Activated naive CD4-positive, alpha-beta T cell treated with anti-CD3 and anti-CD28 coated beads for 36 hours (primary cell): ENCODE measurements at regions of chr6 and their contacts with region 1.

Region 1: GRCh38 chr6:134063966-134064445 is 11.6 kb upstream of the SLC2A12 start:
- DNase-seq: peak; percentile 74
- H3K4me3 Mint-ChIP-seq: no peak overlapping the region
- H3K27ac Mint-ChIP-seq: no peak overlapping the region
- H3K4me1 Mint-ChIP-seq: no peaks in the 10 kb centered on the region
- H3K27me3 Mint-ChIP-seq: no peaks in the 10 kb centered on the region

Region 2: GRCh38 chr6:133952815-133953633 is 111.0 kb before region 1 on chr6 and contains the start of gene TBPL1:
- CTCF ChIA-PET with region 1: interaction called, 10 read pairs
- intact Hi-C with region 1: loop called (anchors 1 kb)
- DNase-seq: peak; percentile 92
- H3K4me3 Mint-ChIP-seq: peak within 1 kb of the TSS; percentile 87
- H3K27ac Mint-ChIP-seq: peak within 1 kb of the TSS; percentile 86
- H3K4me1 Mint-ChIP-seq: peaks cover 36% of the 10 kb centered on the region
- H3K27me3 Mint-ChIP-seq: no peaks in the 10 kb centered on the region
- total RNA-seq, gene TBPL1: 27.0 to 27.6 TPM

Region 3: DNA sequence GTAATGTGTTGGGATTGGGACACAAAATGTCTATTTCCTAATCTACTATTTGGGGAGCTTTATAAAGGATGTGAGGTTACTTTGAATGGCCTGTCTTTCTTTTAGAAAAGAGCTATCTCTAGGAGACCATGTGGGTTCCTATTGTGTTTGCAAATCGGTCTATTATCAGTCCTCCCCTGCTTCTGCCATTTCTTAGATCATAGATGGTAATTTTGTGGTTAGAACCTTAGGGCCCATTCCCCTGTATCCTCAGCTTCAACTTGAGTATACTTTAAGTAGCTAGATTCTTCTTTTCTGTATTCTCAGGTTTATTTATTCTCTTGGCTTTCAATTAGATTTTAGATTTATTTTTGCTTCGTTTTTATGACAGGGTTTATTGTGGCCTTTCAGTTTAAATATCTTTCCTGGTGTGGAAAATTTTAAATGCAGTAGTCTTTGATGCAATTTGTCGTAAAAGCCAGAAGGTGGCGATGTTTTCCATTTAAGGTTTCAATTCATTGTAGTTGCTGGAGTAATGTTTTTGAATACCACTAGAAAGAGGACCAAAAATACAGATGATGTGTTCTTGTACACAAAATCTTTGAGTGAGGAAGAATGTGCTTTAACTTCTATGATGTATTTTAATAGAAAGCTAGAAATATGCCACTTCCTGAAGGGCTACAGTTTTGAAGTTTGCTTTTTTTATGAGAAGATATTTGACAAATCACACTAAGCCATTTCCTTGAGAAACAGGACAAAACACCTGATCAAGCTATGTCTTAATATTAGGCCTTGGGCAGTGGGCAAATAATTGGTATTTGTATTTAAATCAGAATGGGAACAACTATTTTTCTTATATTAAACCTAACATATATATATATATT is 90.7 kb before region 1 on chr6:
- CTCF ChIA-PET with region 1: interaction called, 135 read pairs
- intact Hi-C with region 1: loop called (anchors 1 kb)
- DNase-seq: no peak
- H3K4me3 Mint-ChIP-seq: no peak overlapping the region
- H3K27ac Mint-ChIP-seq: no peak overlapping the region
- H3K4me1 Mint-ChIP-seq: peaks cover 32% of the 10 kb centered on the region
- H3K27me3 Mint-ChIP-seq: no peaks in the 10 kb centered on the region

Region 4: GRCh38 chr6:134021396-134022122 is 42.4 kb before region 1 on chr6:
- CTCF ChIA-PET with region 1: interaction called, 13 read pairs
- intact Hi-C with region 1: no loop called
- DNase-seq: no peak
- H3K4me3 Mint-ChIP-seq: no peak overlapping the region
- H3K27ac Mint-ChIP-seq: no peak overlapping the region
- H3K4me1 Mint-ChIP-seq: peaks cover 3% of the 10 kb centered on the region
- H3K27me3 Mint-ChIP-seq: no peaks in the 10 kb centered on the region

Region 5: DNA sequence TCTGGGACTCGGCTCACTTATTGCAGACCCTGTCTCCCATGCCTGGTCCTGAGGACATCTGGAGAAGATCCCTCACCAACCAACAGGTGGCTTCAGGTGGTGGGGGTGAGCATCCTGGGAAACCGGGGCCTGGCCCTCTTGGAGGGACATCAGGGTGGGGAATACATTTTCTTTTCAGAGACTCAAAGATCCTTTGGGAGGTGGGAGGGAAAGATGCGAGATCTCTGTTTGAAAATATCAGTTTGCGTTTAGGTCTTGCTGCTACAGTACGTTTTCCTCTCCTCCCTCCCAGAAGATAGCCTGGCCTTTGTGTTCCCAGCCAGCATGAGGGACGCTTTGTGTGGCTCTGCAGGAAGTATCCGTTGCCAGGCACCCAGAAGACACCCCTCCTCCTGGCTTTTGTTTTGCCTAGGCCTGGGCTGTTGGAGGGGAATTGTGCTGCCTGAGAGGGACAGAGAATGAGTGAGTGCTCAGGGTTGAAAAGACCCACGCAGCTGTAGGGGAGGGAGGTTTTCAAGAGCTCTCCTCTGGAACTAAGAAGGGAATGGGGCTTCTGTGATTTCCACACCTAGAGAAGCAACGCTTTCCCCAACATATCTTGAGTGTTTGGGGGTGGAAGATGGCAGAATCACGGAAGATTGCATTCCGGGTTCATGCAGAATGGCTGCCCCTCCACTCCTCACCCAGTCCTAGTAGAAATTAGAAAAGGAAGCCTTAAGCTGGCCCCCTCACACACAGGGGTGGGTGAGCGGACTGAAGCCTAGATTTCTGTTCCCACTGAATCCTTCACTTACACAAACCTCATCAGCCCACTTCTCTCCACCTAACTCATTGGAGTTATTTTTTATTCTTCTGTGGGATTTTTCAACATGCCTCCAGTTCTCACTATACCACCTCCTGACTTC is 10.4 kb after region 1 on chr6:
- CTCF ChIA-PET with region 1: interaction called, 13 read pairs
- intact Hi-C with region 1: no loop called
- DNase-seq: no peak
- H3K4me3 Mint-ChIP-seq: no peak overlapping the region
- H3K27ac Mint-ChIP-seq: no peak overlapping the region
- H3K4me1 Mint-ChIP-seq: no peaks in the 10 kb centered on the region
- H3K27me3 Mint-ChIP-seq: no peaks in the 10 kb centered on the region